ENCODE measurements at regions of chr17 and their contacts with region 1.

Region 1: GRCh38 chr17:11986942-11987329 is 10.3 kb downstream of the ZNF18 start:
- DNase-seq: peak; percentile 61
- H3K4me3 Mint-ChIP-seq: no peak overlapping the region
- H3K27ac Mint-ChIP-seq: no peak overlapping the region
- H3K4me1 Mint-ChIP-seq: peaks cover 5% of the 10 kb centered on the region
- H3K27me3 Mint-ChIP-seq: no peaks in the 10 kb centered on the region
- CTCF ChIP-seq: peak; percentile 69

Region 2: GRCh38 chr17:10875979-10876555 is 1110.9 kb before region 1 on chr17:
- CTCF ChIA-PET with region 1: interaction called, 66 read pairs
- POLR2A ChIA-PET with region 1: no interaction called
- intact Hi-C with region 1: loop called (anchors 1 kb)
- DNase-seq: peak; percentile 27
- H3K4me3 Mint-ChIP-seq: no peak overlapping the region
- H3K27ac Mint-ChIP-seq: no peak overlapping the region
- H3K4me1 Mint-ChIP-seq: peaks cover 9% of the 10 kb centered on the region
- H3K27me3 Mint-ChIP-seq: peaks cover 11% of the 10 kb centered on the region
- CTCF ChIP-seq: peak; percentile 75

Region 3: GRCh38 chr17:11404431-11405276 is 582.3 kb before region 1 on chr17:
- CTCF ChIA-PET with region 1: no interaction called
- POLR2A ChIA-PET with region 1: no interaction called
- intact Hi-C with region 1: loop called (anchors 10 kb)
- DNase-seq: no peak
- H3K4me3 Mint-ChIP-seq: no peak overlapping the region
- H3K27ac Mint-ChIP-seq: peak overlapping the region; percentile 63
- H3K4me1 Mint-ChIP-seq: peaks cover 15% of the 10 kb centered on the region
- H3K27me3 Mint-ChIP-seq: no peaks in the 10 kb centered on the region
- CTCF ChIP-seq: no peak

Region 4: GRCh38 chr17:11742886-11743285 is 244.1 kb before region 1 on chr17:
- CTCF ChIA-PET with region 1: no interaction called
- POLR2A ChIA-PET with region 1: no interaction called
- intact Hi-C with region 1: loop called (anchors 10 kb)
- DNase-seq: no peak
- H3K4me3 Mint-ChIP-seq: no peak overlapping the region
- H3K27ac Mint-ChIP-seq: no peak overlapping the region
- H3K4me1 Mint-ChIP-seq: peaks cover 12% of the 10 kb centered on the region
- H3K27me3 Mint-ChIP-seq: no peaks in the 10 kb centered on the region
- CTCF ChIP-seq: no peak

Region 5: GRCh38 chr17:11935734-11936406 is 51.1 kb before region 1 on chr17:
- CTCF ChIA-PET with region 1: interaction called, 48 read pairs
- POLR2A ChIA-PET with region 1: interaction called, 7 read pairs
- intact Hi-C with region 1: loop called (anchors 5 kb)
- DNase-seq: peak; percentile 79
- H3K4me3 Mint-ChIP-seq: no peak overlapping the region
- H3K27ac Mint-ChIP-seq: no peak overlapping the region
- H3K4me1 Mint-ChIP-seq: peaks cover 5% of the 10 kb centered on the region
- H3K27me3 Mint-ChIP-seq: no peaks in the 10 kb centered on the region
- CTCF ChIP-seq: peak; percentile 94

Region 6: GRCh38 chr17:11948789-11949188 is 38.1 kb before region 1 on chr17:
- CTCF ChIA-PET with region 1: interaction called, 21 read pairs
- POLR2A ChIA-PET with region 1: interaction called, 15 read pairs
- intact Hi-C with region 1: no loop called
- DNase-seq: peak; percentile 91
- H3K4me3 Mint-ChIP-seq: peak overlapping the region; percentile 55
- H3K27ac Mint-ChIP-seq: peak overlapping the region; percentile 28
- H3K4me1 Mint-ChIP-seq: peaks cover 31% of the 10 kb centered on the region
- H3K27me3 Mint-ChIP-seq: no peaks in the 10 kb centered on the region
- CTCF ChIP-seq: no peak

Region 7: DNA sequence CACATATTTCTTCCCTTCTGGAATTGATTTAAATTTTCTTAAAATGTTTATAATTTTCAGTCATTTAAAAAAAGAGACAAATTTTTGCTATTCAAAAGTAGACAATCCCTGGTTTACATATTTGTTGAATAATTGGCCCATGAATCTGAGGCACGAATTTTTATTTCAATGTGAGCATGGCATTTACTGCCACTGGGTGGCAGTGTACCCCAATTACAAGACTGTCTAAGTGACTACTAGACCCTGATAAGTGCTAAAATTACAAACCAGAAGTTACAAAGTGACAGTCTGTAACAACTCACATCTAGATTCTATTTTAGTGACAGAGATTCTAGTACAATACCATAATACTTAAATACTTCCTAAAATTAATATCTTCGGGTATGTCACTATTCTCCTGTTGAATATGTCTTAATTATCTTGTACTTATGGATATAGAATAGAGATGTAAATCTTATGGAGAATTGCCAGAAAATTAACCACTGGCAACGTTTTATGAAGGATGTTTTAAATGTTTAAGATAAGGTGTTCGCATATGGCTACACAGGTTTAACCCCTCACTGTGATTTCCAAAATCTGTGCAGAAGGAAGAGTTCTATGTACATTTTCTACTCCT is 269.6 kb after region 1 on chr17:
- CTCF ChIA-PET with region 1: no interaction called
- POLR2A ChIA-PET with region 1: no interaction called
- intact Hi-C with region 1: no loop called
- DNase-seq: peak; percentile 56
- H3K4me3 Mint-ChIP-seq: no peak overlapping the region
- H3K27ac Mint-ChIP-seq: no peak overlapping the region
- H3K4me1 Mint-ChIP-seq: no peaks in the 10 kb centered on the region
- H3K27me3 Mint-ChIP-seq: no peaks in the 10 kb centered on the region
- CTCF ChIP-seq: peak; percentile 76